Gastrocnemius medialis (tissue), 4 donors: ENCODE measurements at regions of chr1 and their contacts with region 1.

Region 1: GRCh38 chr1:168609133-168609715 is 32.8 kb downstream of the XCL1 start:
- DNase-seq: peak; percentile 86 to 91
- ATAC-seq: peak; percentile 79 to 80
- H3K4me3 ChIP-seq: peak overlapping the region; percentile 35 to 54 (median 46)
- H3K27ac ChIP-seq: peak overlapping the region; percentile 96 to 100 (median 96)
- H3K4me1 ChIP-seq: peaks cover 72 to 79% of the 10 kb centered on the region in 2 donors
- H3K27me3 ChIP-seq: no peaks in the 10 kb centered on the region
- CTCF ChIP-seq: no peak
- POLR2A ChIP-seq: peak; percentile 51 to 87

Region 2: GRCh38 chr1:168623003-168623828 is 14.0 kb after region 1 on chr1:
- in situ Hi-C with region 1: no loop called
- intact Hi-C with region 1: loop called (anchors 1 kb)
- DNase-seq: peak; percentile 88 to 92
- ATAC-seq: peak; percentile 88 to 93
- H3K4me3 ChIP-seq: peak overlapping the region in 3 of 4 donors; percentile 15 to 31 (median 24)
- H3K27ac ChIP-seq: peak overlapping the region; percentile 85 to 100 (median 90)
- H3K4me1 ChIP-seq: peaks cover 29 to 37% of the 10 kb centered on the region in 2 donors
- H3K27me3 ChIP-seq: no peaks in the 10 kb centered on the region
- CTCF ChIP-seq: peak in 2 of 5 experiments; percentile 22 to 25
- POLR2A ChIP-seq: peak in 1 of 2 donors; percentile 81

Region 3: GRCh38 chr1:168893359-168893801 is 284.2 kb after region 1 on chr1:
- in situ Hi-C with region 1: loop called in 2 of 4 experiments (anchors 10 kb)
- intact Hi-C with region 1: loop called (anchors 5 kb)
- DNase-seq: peak; percentile 74 to 88
- ATAC-seq: peak; percentile 98 to 99
- H3K4me3 ChIP-seq: peak overlapping the region in 2 of 4 donors; percentile 11 to 19
- H3K27ac ChIP-seq: peak overlapping the region; percentile 83 to 95 (median 88)
- H3K4me1 ChIP-seq: peaks cover 8 to 21% of the 10 kb centered on the region in 2 donors
- H3K27me3 ChIP-seq: no peaks in the 10 kb centered on the region
- CTCF ChIP-seq: no peak
- POLR2A ChIP-seq: peak; percentile 11 to 47

Region 4: GRCh38 chr1:169115891-169116585 is 506.8 kb after region 1 on chr1:
- in situ Hi-C with region 1: loop called in 2 of 4 experiments (anchors 10 kb)
- intact Hi-C with region 1: loop called (anchors 1 kb)
- DNase-seq: peak in 1 of 2 donors; percentile 89
- ATAC-seq: peak in 1 of 2 donors; percentile 37
- H3K4me3 ChIP-seq: peak overlapping the region in 3 of 4 donors; percentile 12 to 35 (median 26)
- H3K27ac ChIP-seq: peak overlapping the region; percentile 93 to 99 (median 96)
- H3K4me1 ChIP-seq: peaks cover 95 to 97% of the 10 kb centered on the region in 2 donors
- H3K27me3 ChIP-seq: no peaks in the 10 kb centered on the region
- CTCF ChIP-seq: no peak
- POLR2A ChIP-seq: no peak

Region 5: DNA sequence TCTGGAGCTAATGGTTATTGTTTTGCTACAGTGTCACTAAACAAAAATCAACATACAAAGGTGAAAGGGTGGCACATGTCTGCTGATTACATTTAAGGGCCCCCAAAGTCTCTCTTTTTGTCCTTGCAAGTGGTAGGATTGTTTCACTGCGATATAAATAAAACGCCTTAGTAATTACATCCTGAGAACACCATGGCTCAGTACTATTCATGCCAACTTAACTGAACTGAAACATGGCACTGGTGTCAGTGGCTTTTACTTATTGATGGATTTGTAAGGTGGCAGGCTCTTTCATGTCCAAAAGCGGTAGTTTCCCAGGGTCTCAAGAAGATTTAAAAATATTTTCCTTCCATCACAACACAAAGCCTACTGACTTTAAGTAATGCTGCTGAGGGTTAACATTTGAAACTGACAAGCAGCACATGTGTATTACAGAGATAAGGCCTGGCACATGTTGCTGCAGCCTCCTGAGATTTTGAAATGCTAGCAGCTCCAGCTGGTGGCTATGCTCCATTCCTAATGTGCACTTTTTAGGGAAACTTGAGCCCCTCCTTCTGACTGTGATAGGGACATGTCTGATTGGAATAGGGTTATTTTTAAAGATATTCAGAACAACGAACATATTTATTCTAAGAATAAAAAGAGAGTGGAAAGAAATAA is 584.1 kb after region 1 on chr1:
- in situ Hi-C with region 1: no loop called
- intact Hi-C with region 1: loop called (anchors 5 kb)
- DNase-seq: peak; percentile 29 to 55
- ATAC-seq: peak; percentile 93 to 95
- H3K4me3 ChIP-seq: no peak overlapping the region
- H3K27ac ChIP-seq: peak overlapping the region; percentile 66 to 77 (median 70)
- H3K4me1 ChIP-seq: peaks cover 12 to 14% of the 10 kb centered on the region in 2 donors
- H3K27me3 ChIP-seq: no peaks in the 10 kb centered on the region
- CTCF ChIP-seq: no peak
- POLR2A ChIP-seq: no peak

Region 6: GRCh38 chr1:169367486-169368405 is 758.5 kb after region 1 on chr1 and contains the starts of genes BLZF1 and NME7:
- in situ Hi-C with region 1: no loop called
- intact Hi-C with region 1: loop called (anchors 5 kb)
- DNase-seq: peak; percentile 93 to 94
- ATAC-seq: peak; percentile 99
- H3K4me3 ChIP-seq: peak within 1 kb of the TSS; percentile 66 to 90 (median 74)
- H3K27ac ChIP-seq: peak within 1 kb of the TSS; percentile 80 to 89 (median 86)
- H3K4me1 ChIP-seq: peaks cover 15 to 18% of the 10 kb centered on the region in 2 donors
- H3K27me3 ChIP-seq: no peaks in the 10 kb centered on the region
- CTCF ChIP-seq: no peak
- POLR2A ChIP-seq: peak; percentile 43
- total RNA-seq, gene BLZF1: 10.2 to 17.7 (median 14.6) TPM
- total RNA-seq, gene NME7: 3.7 to 8.4 (median 5.5) TPM